Naive thymus-derived CD4-positive, alpha-beta T cell (primary cell): ENCODE measurements at regions of chr14 and their contacts with region 1.

Region 1: GRCh38 chr14:23379366-23380196 is 2.7 kb downstream of the CMTM5 start:
- DNase-seq: peak; percentile 48 to 77 (median 68)
- ATAC-seq: peak; percentile 86
- H3K4me3 ChIP-seq: no peak overlapping the region
- H3K4me3 Mint-ChIP-seq: no peak overlapping the region
- H3K27ac ChIP-seq: no peak overlapping the region
- H3K27ac Mint-ChIP-seq: no peak overlapping the region
- H3K4me1 ChIP-seq: no peaks in the 10 kb centered on the region
- H3K4me1 Mint-ChIP-seq: peaks cover 0 to 3% (median 0%) of the 10 kb centered on the region in 7 donors
- H3K27me3 ChIP-seq: no peaks in the 10 kb centered on the region
- H3K27me3 Mint-ChIP-seq: peaks cover 0 to 16% (median 0%) of the 10 kb centered on the region in 5 donors

Region 2: GRCh38 chr14:23258256-23258655 is 121.3 kb before region 1 on chr14:
- CTCF ChIA-PET with region 1: interaction called, 55 read pairs
- POLR2A ChIA-PET with region 1: no interaction called
- intact Hi-C with region 1: no loop called
- DNase-seq: no peak
- ATAC-seq: no peak
- H3K4me3 ChIP-seq: no peak overlapping the region
- H3K4me3 Mint-ChIP-seq: no peak overlapping the region
- H3K27ac ChIP-seq: no peak overlapping the region
- H3K27ac Mint-ChIP-seq: no peak overlapping the region
- H3K4me1 ChIP-seq: no peaks in the 10 kb centered on the region
- H3K4me1 Mint-ChIP-seq: no peaks in the 10 kb centered on the region
- H3K27me3 ChIP-seq: no peaks in the 10 kb centered on the region
- H3K27me3 Mint-ChIP-seq: peaks cover 26 to 48% (median 43%) of the 10 kb centered on the region in 5 donors

Region 3: DNA sequence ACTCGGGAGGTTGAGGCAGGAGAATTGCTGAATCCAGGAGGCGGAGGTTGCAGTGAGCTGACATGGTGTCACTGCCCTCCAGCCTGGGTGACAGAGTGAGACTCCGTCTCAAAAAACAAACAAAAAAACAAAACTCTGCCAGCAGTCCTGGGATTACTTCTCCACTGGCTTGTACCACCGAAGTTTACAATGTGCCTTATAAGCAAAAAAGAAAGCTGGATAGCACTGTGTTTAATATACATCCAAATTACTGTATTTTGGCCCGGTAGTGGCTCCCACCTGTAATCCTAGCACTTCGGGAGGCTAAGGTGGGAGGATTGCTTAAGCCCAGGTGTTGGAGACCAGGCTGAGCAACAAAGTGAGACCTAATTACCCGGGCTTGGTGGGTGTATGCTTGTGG is 110.4 kb before region 1 on chr14:
- CTCF ChIA-PET with region 1: interaction called, 55 read pairs
- POLR2A ChIA-PET with region 1: interaction called, 3 read pairs
- intact Hi-C with region 1: loop called in 1 of 2 experiments (anchors 1 kb)
- DNase-seq: no peak
- ATAC-seq: no peak
- H3K4me3 ChIP-seq: no peak overlapping the region
- H3K4me3 Mint-ChIP-seq: no peak overlapping the region
- H3K27ac ChIP-seq: no peak overlapping the region
- H3K27ac Mint-ChIP-seq: no peak overlapping the region
- H3K4me1 ChIP-seq: no peaks in the 10 kb centered on the region
- H3K4me1 Mint-ChIP-seq: no peaks in the 10 kb centered on the region
- H3K27me3 ChIP-seq: peaks cover 0 to 4% of the 10 kb centered on the region in 2 donors
- H3K27me3 Mint-ChIP-seq: peaks cover 0 to 18% (median 12%) of the 10 kb centered on the region in 5 donors

Region 4: GRCh38 chr14:23327947-23328744 is 51.4 kb before region 1 on chr14:
- CTCF ChIA-PET with region 1: interaction called, 30 read pairs
- POLR2A ChIA-PET with region 1: interaction called, 3 read pairs
- intact Hi-C with region 1: loop called (anchors 1 kb)
- DNase-seq: peak in 8 of 9 donors; percentile 49 to 69 (median 59)
- ATAC-seq: peak; percentile 86
- H3K4me3 ChIP-seq: no peak overlapping the region
- H3K4me3 Mint-ChIP-seq: no peak overlapping the region
- H3K27ac ChIP-seq: no peak overlapping the region
- H3K27ac Mint-ChIP-seq: peak overlapping the region in 3 of 9 donors; percentile 6 to 34 (median 23)
- H3K4me1 ChIP-seq: peaks cover 0 to under 1% of the 10 kb centered on the region in 2 donors
- H3K4me1 Mint-ChIP-seq: peaks cover 3 to 11% (median 8%) of the 10 kb centered on the region in 7 donors
- H3K27me3 ChIP-seq: no peaks in the 10 kb centered on the region
- H3K27me3 Mint-ChIP-seq: peaks cover 0 to 6% (median 0%) of the 10 kb centered on the region in 5 donors

Region 5: DNA sequence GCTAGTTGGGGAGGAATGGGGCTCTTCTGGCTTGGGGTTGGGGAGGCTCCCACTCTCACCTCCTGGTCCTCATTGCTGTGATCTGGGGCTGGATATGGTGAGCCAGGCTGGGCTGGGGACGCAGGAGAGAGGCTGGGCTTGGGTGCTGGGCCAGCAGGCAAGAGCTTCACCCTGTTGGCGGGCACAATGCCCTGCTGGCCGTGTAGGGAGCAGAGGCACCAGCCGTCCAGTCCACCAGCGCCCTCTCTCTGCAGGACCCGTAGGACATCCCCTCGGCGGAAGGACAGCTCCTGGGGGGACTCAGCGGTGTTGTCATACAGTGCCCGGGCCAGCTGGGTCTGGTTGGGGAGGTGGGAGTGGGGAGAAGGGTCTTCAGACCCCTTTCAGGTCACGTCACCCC is 19.1 kb before region 1 on chr14:
- CTCF ChIA-PET with region 1: no interaction called
- POLR2A ChIA-PET with region 1: no interaction called
- intact Hi-C with region 1: no loop called
- DNase-seq: no peak
- ATAC-seq: no peak
- H3K4me3 ChIP-seq: no peak overlapping the region
- H3K4me3 Mint-ChIP-seq: no peak overlapping the region
- H3K27ac ChIP-seq: no peak overlapping the region
- H3K27ac Mint-ChIP-seq: no peak overlapping the region
- H3K4me1 ChIP-seq: no peaks in the 10 kb centered on the region
- H3K4me1 Mint-ChIP-seq: peaks cover 0 to 5% (median 3%) of the 10 kb centered on the region in 7 donors
- H3K27me3 ChIP-seq: no peaks in the 10 kb centered on the region
- H3K27me3 Mint-ChIP-seq: peaks cover 9 to 21% (median 19%) of the 10 kb centered on the region in 5 donors

Region 6: GRCh38 chr14:23392613-23393012 is 13.0 kb after region 1 on chr14:
- CTCF ChIA-PET with region 1: interaction called, 11 read pairs
- POLR2A ChIA-PET with region 1: no interaction called
- intact Hi-C with region 1: no loop called
- DNase-seq: no peak
- ATAC-seq: no peak
- H3K4me3 ChIP-seq: no peak overlapping the region
- H3K4me3 Mint-ChIP-seq: no peak overlapping the region
- H3K27ac ChIP-seq: no peak overlapping the region
- H3K27ac Mint-ChIP-seq: no peak overlapping the region
- H3K4me1 ChIP-seq: no peaks in the 10 kb centered on the region
- H3K4me1 Mint-ChIP-seq: no peaks in the 10 kb centered on the region
- H3K27me3 ChIP-seq: no peaks in the 10 kb centered on the region
- H3K27me3 Mint-ChIP-seq: peaks cover 0 to 16% (median 4%) of the 10 kb centered on the region in 5 donors

Region 7: GRCh38 chr14:24429395-24430142 is 1050.0 kb after region 1 on chr14 and contains the starts of genes CBLN3 and KHNYN:
- CTCF ChIA-PET with region 1: no interaction called
- POLR2A ChIA-PET with region 1: no interaction called
- intact Hi-C with region 1: no loop called
- DNase-seq: peak; percentile 79 to 89 (median 88)
- ATAC-seq: peak; percentile 90
- H3K4me3 ChIP-seq: peak within 1 kb of the TSS; percentile 96
- H3K4me3 Mint-ChIP-seq: peak within 1 kb of the TSS; percentile 82 to 96 (median 91)
- H3K27ac ChIP-seq: peak within 1 kb of the TSS; percentile 99
- H3K27ac Mint-ChIP-seq: peak within 1 kb of the TSS; percentile 91 to 99 (median 98)
- H3K4me1 ChIP-seq: peaks cover 22 to 47% of the 10 kb centered on the region in 2 donors
- H3K4me1 Mint-ChIP-seq: peaks cover 24 to 59% (median 58%) of the 10 kb centered on the region in 7 donors
- H3K27me3 ChIP-seq: no peaks in the 10 kb centered on the region
- H3K27me3 Mint-ChIP-seq: no peaks in the 10 kb centered on the region
- total RNA-seq, gene CBLN3: 2.0 to 13.9 (median 2.9) TPM
- total RNA-seq, gene KHNYN: 96.9 to 139 (median 129) TPM